BJ (cell line): ENCODE measurements at regions of chr9 and their contacts with region 1.

Region 1: DNA sequence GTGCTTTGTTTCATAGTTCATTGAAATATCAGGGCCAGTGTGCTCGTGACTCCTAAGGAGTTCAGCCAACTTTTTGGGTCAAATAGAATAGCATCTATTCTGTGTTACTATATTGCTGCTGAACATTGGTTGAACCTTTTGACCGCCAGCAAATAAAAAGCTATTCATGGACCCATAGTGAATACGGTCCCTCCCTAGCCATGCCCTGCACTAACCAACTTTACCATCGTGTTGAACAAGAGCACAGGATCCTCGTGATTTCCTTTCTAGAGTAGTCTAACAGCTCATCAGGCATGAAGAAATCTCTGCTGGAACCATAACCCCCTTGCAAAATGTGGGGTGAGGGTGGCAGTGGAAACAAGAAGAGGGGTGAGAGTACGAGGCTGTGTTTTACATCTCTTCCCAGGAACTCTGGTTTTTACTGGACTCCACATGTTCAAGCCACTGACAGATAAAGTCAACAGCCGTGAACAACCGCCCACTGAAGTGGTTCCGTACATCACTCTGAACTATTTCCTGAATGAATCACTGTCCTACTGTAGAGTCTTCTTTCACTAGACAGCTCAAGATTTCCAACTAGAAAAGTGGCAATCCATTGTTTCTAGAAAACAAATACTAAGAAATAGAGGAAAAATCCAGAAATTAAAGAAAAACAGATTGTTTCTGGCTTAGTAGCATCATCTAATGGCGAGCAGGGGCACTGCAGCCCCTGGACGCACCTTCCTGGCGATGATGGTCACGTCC is 70.1 kb upstream of the SPATA31E1 start:
- DNase-seq: peak; percentile 31
- H3K4me3 ChIP-seq: no peak overlapping the region
- H3K27me3 ChIP-seq: peaks cover 5% of the 10 kb centered on the region
- CTCF ChIP-seq: peak; percentile 97

Region 2: DNA sequence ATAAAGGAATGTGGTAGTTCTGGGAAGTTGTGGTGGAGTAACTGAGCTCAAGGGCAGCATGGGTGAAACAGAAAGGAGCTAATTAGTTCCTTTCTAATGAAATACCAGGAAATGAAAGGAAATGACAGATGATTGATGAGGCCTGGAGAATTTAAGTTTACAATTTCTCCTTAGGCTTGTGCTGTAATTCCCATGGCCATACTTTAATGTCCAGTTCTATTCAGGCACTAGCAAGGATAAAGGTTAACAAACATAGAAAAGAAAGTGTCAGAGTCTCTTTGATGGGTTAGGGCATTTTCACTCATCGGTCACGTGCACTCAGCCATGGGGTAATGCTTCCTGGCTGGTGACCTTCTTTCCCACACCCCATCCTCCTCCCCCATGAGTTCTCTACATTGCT is 16.4 kb before region 1 on chr9:
- CTCF ChIA-PET with region 1: interaction called, 21 read pairs
- POLR2A ChIA-PET with region 1: no interaction called
- DNase-seq: no peak
- H3K4me3 ChIP-seq: no peak overlapping the region
- H3K27me3 ChIP-seq: no peaks in the 10 kb centered on the region
- CTCF ChIP-seq: no peak